ENCODE measurements at regions of chr7 and their contacts with region 1.

Region 1: DNA sequence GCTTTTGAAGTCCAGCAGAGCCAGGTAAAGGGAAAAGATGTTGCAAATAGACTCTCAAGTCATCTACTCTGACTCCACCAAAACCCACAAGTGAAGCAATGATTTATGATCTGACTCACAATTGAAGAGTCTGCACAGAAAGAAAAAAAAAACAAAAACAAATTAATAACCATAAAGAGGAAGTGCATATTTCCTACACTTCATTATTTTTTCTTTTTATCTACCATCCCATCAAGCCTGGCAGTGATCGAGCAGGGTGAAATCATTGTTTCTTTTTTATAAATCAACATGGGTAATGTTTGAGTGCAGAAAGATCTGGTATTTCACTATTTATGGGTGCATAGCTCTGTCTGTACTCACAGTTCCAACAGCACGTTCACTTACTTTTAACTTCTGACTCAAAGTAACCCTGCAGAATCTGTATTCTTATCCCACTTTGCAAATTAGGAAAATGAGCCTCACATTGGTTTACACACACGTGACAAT is 829.0 kb downstream of the TNS3 start:
- DNase-seq: peak; percentile 87
- ATAC-seq: peak; percentile 85
- H3K4me3 ChIP-seq: no peak overlapping the region
- H3K27ac ChIP-seq: peak overlapping the region; percentile 62
- H3K4me1 ChIP-seq: peaks cover 34% of the 10 kb centered on the region
- H3K27me3 ChIP-seq: no peaks in the 10 kb centered on the region
- CTCF ChIP-seq: no peak

Region 2: DNA sequence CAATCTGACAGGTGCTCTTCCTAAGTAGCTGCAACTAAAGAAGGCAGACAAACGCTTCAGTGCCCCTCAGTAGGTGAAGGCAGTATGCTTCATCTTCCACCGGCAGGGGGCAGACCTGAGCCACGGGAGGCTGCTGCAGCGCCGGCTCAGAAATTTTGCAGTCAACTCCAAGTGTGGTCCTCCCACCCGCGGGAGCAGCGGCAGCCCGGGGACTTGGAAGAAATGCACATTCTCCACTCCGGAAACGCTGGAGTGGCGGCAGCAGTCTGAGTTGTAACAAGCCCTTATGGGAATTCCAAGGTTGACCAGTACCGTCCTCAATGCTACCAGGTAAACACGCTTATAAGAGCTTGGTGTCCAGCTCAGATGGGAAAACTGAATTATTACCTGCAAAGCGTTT is 835.3 kb before region 1 on chr7:
- CTCF ChIA-PET with region 1: no interaction called
- POLR2A ChIA-PET with region 1: no interaction called
- intact Hi-C with region 1: loop called (anchors 2 kb)
- DNase-seq: peak; percentile 81
- ATAC-seq: peak; percentile 22
- H3K4me3 ChIP-seq: peak overlapping the region; percentile 80
- H3K27ac ChIP-seq: no peak overlapping the region
- H3K4me1 ChIP-seq: peaks cover 33% of the 10 kb centered on the region
- H3K27me3 ChIP-seq: no peaks in the 10 kb centered on the region
- CTCF ChIP-seq: peak; percentile 92

Region 3: DNA sequence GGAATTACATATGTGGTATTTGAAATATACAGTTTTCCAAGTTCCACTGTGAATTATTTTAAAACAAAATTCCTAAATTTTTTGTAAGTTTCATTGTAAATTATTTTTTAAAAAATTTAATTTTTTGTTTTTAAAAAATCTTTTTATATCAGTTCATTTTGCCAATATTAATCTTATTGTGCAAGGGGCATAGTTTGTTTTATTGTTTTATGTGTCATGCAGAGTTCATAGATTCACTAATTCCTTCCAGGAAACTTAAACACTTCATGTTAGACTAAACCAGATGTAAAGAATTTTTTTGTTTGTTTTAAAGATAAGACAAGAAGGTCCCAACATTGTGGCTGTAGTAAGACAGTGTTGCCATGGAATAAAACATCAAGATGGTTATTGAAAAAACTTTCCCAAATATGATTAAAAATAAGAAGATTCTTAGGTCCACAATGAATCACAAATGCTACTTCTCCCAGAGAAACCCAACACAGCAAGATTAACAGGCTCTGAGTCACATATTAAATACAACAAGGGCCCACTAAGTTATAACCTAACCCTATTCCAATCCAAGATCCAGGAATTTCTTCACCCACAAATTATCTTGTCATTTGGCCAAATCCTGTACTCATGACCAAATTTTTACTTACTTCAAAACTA is 367.1 kb before region 1 on chr7:
- CTCF ChIA-PET with region 1: no interaction called
- POLR2A ChIA-PET with region 1: no interaction called
- intact Hi-C with region 1: loop called (anchors 5 kb)
- DNase-seq: peak; percentile 94
- ATAC-seq: peak; percentile 98
- H3K4me3 ChIP-seq: no peak overlapping the region
- H3K27ac ChIP-seq: peak overlapping the region; percentile 95
- H3K4me1 ChIP-seq: peaks cover 27% of the 10 kb centered on the region
- H3K27me3 ChIP-seq: no peaks in the 10 kb centered on the region
- CTCF ChIP-seq: no peak

Region 4: DNA sequence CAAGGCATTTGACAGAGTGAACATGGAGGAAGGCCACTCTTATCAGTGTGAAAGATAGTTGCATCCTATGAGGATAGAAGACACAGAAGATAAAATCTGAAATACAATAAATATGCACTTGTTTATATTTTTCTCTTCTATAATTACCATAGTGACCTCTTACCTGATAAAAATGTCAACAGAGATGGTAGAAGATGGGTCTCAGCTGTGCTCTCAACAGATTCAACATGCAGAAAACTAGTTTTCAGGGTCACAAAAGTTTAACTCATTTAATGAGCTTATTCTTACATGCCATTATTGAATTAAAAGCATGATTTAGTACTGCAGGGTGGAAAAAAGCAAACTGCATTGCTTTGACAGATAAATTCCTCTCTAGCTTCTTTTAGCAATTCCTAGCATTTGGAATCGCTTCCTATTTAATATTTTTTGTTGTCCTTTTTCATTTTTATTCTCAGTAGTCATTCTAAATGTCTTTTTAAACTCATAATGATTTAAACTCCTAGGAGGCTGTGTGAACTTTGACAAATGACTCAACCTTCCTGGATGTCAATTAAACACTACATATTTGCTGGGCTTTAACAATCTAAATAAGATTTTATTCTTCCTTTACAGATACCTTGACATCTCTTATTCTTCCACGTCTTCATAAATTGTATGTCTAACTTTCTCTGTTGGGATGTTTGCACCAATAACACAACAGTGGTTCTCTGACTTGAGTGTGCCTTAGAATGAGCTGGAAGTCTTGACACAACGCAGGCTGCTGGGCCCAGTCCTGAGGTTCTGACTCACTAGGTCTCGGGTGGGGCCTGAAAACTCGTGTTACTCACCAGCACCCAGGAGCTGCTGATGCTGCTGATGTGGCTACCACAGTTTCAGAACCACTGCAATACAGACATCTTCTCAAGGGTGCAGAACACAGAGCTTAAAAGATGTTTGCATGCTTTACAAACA is 266.4 kb before region 1 on chr7:
- CTCF ChIA-PET with region 1: no interaction called
- POLR2A ChIA-PET with region 1: no interaction called
- intact Hi-C with region 1: loop called (anchors 1 kb)
- DNase-seq: peak; percentile 80
- ATAC-seq: peak; percentile 82
- H3K4me3 ChIP-seq: peak overlapping the region; percentile 7; the same call in 1 of the 2 replicates
- H3K27ac ChIP-seq: peak overlapping the region; percentile 88
- H3K4me1 ChIP-seq: peaks cover 39% of the 10 kb centered on the region
- H3K27me3 ChIP-seq: no peaks in the 10 kb centered on the region
- CTCF ChIP-seq: no peak

Region 5: GRCh38 chr7:46544374-46545008 is 208.4 kb before region 1 on chr7:
- CTCF ChIA-PET with region 1: no interaction called
- POLR2A ChIA-PET with region 1: no interaction called
- intact Hi-C with region 1: loop called (anchors 2 kb)
- DNase-seq: peak; percentile 76
- ATAC-seq: peak; percentile 62
- H3K4me3 ChIP-seq: no peak overlapping the region
- H3K27ac ChIP-seq: peak overlapping the region; percentile 85
- H3K4me1 ChIP-seq: peaks cover 32% of the 10 kb centered on the region
- H3K27me3 ChIP-seq: no peaks in the 10 kb centered on the region
- CTCF ChIP-seq: no peak

Region 6: GRCh38 chr7:46654546-46655443 is 98.1 kb before region 1 on chr7:
- CTCF ChIA-PET with region 1: no interaction called
- POLR2A ChIA-PET with region 1: no interaction called
- intact Hi-C with region 1: loop called (anchors 5 kb)
- DNase-seq: peak; percentile 41
- ATAC-seq: no peak
- H3K4me3 ChIP-seq: no peak overlapping the region
- H3K27ac ChIP-seq: peak overlapping the region; percentile 10; the same call in 1 of the 2 replicates
- H3K4me1 ChIP-seq: peaks cover 23% of the 10 kb centered on the region
- H3K27me3 ChIP-seq: no peaks in the 10 kb centered on the region
- CTCF ChIP-seq: 0 out of 2 replicates have a peak, but pooled peaks have one; percentile 9

Region 7: DNA sequence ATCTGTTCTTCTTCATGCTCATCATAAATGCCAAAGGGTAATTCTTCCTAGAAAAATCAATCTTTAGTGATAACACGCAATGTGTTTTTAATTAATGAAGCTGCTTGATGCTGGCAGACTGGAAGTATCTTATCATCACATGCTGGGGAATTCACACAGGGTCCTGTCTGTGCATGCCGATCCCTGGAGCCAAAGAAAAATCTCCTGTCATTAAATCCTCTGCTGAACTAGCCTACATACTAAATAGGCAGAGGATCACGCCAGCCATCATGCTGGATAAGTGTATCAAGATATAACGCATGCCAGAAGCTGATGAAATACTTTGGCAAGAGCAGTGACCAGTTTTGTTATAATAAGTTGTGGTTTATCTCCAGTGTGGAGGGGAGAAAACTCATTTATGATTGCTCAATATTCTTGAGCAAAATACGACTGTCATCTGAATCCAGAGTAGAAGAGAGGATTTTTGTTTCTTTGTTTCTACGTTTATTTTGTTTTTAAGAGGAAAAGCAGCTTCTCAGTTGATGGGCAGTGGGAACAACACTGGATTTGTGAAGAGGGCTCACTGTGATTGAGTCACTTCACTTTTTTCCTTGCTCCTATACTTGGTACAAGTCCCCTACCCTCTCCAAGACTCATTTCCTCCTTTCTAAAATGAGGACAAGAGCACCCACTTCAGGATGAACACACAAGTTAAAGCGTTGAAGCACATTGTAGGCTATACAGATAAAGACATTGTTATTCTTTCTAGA is 179.9 kb after region 1 on chr7:
- CTCF ChIA-PET with region 1: no interaction called
- POLR2A ChIA-PET with region 1: no interaction called
- intact Hi-C with region 1: loop called (anchors 5 kb)
- DNase-seq: peak; percentile 52
- ATAC-seq: no peak
- H3K4me3 ChIP-seq: no peak overlapping the region
- H3K27ac ChIP-seq: no peak overlapping the region
- H3K4me1 ChIP-seq: peaks cover 18% of the 10 kb centered on the region
- H3K27me3 ChIP-seq: no peaks in the 10 kb centered on the region
- CTCF ChIP-seq: peak; percentile 34; the same call in 1 of the 2 replicates